Activated CD4-positive, alpha-beta T cell treated with anti-CD3 and anti-CD28 coated beads, Interleukin-2, amount 10 ng/mL, durations not matched to agents 24 days and 14 days (primary cell): ENCODE measurements at regions of chr10 and their contacts with region 1.

Region 1: GRCh38 chr10:124626759-124627380 is 117.3 kb downstream of the FAM53B start:
- DNase-seq: peak; percentile 82
- H3K4me3 Mint-ChIP-seq: peak overlapping the region; percentile 34
- H3K27ac Mint-ChIP-seq: peak overlapping the region; percentile 34
- H3K4me1 Mint-ChIP-seq: peaks cover 24% of the 10 kb centered on the region
- H3K27me3 Mint-ChIP-seq: peaks cover 7% of the 10 kb centered on the region

Region 2: GRCh38 chr10:124522933-124523871 is 103.7 kb before region 1 on chr10:
- intact Hi-C with region 1: no loop called
- DNase-seq: no peak
- H3K4me3 Mint-ChIP-seq: no peak overlapping the region
- H3K27ac Mint-ChIP-seq: no peak overlapping the region
- H3K4me1 Mint-ChIP-seq: no peaks in the 10 kb centered on the region
- H3K27me3 Mint-ChIP-seq: no peaks in the 10 kb centered on the region

Region 3: GRCh38 chr10:124614003-124614659 is 12.7 kb before region 1 on chr10:
- intact Hi-C with region 1: loop called (anchors 1 kb)
- DNase-seq: peak; percentile 79
- H3K4me3 Mint-ChIP-seq: no peak overlapping the region
- H3K27ac Mint-ChIP-seq: peak overlapping the region; percentile 25
- H3K4me1 Mint-ChIP-seq: peaks cover 32% of the 10 kb centered on the region
- H3K27me3 Mint-ChIP-seq: peaks cover 1% of the 10 kb centered on the region

Region 4: GRCh38 chr10:124647421-124648130 is 20.7 kb after region 1 on chr10:
- intact Hi-C with region 1: loop called (anchors 1 kb)
- DNase-seq: peak; percentile 92
- H3K4me3 Mint-ChIP-seq: peak overlapping the region; percentile 81
- H3K27ac Mint-ChIP-seq: peak overlapping the region; percentile 94
- H3K4me1 Mint-ChIP-seq: peaks cover 64% of the 10 kb centered on the region
- H3K27me3 Mint-ChIP-seq: no peaks in the 10 kb centered on the region

Region 5: DNA sequence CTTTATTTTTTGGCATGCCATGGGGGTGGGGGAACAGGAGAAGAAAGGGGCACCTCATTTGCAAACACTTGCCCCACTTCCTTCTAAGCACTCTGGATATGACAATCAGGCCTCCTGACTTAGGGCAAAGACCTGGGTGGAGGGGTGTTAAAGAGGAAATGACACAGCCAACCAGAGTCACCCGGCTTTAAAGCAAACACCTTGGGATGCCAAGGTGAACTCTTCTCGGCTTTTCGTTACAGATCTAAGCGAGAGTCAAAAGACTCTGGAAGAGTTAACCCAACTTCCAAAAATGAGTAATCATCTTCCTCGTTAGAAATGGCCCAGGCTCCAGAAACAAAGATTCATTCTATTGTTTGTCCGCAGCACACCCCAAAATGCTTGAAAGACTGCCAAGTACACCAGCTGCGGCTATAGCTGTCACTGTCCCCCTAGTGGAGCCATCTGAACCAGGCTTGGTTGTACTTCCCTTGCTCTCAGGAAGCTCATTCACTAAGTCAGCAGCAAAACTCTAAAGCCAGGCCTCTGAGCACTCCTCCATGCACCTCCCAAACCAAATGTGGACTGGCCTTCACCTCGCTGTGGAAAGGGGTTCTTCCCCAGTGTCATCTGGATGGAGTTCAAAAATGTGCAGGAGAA is 92.5 kb after region 1 on chr10:
- intact Hi-C with region 1: loop called (anchors 1 kb)
- DNase-seq: peak; percentile 88
- H3K4me3 Mint-ChIP-seq: peak overlapping the region; percentile 43
- H3K27ac Mint-ChIP-seq: peak overlapping the region; percentile 78
- H3K4me1 Mint-ChIP-seq: peaks cover 78% of the 10 kb centered on the region
- H3K27me3 Mint-ChIP-seq: no peaks in the 10 kb centered on the region

Region 6: GRCh38 chr10:124732931-124733570 is 106.2 kb after region 1 on chr10:
- intact Hi-C with region 1: loop called (anchors 2 kb)
- DNase-seq: peak; percentile 80
- H3K4me3 Mint-ChIP-seq: peak overlapping the region; percentile 51
- H3K27ac Mint-ChIP-seq: peak overlapping the region; percentile 63
- H3K4me1 Mint-ChIP-seq: peaks cover 67% of the 10 kb centered on the region
- H3K27me3 Mint-ChIP-seq: no peaks in the 10 kb centered on the region

Region 7: GRCh38 chr10:125060826-125061556 is 434.1 kb after region 1 on chr10:
- intact Hi-C with region 1: loop called (anchors 10 kb)
- DNase-seq: peak; percentile 74
- H3K4me3 Mint-ChIP-seq: no peak overlapping the region
- H3K27ac Mint-ChIP-seq: no peak overlapping the region
- H3K4me1 Mint-ChIP-seq: peaks cover 12% of the 10 kb centered on the region
- H3K27me3 Mint-ChIP-seq: peaks cover 22% of the 10 kb centered on the region